ENCODE measurements at regions of chr4 and their contacts with region 1.

Region 1: DNA sequence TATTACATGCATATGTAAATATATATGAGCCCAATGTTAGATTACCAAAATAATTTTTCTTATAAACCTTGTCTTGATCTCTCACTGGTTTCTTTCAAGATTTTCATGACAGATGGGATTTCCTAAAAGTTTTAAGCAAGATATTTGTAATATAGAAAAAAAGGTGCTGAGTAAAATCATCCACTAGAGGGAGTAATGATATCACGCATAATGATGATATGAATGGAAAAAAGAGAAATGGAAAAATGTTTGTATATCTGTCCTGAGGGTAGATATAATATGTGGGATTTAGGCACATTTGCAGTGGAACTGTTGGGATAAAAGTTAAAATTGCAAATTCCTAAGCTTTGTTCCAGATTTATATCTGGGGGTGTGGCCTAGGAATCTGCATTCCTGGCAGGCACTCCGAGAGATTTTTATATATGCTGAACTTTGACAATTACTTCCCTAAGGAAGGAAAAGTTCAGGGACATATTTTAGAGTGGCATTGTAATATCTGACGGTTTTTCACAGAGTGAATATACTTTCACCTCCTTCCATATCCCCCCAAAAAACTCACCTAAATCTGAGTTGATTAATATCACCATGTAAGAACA is 60.5 kb downstream of the TMA16 start:
- DNase-seq: no peak
- H3K4me3 ChIP-seq: no peak overlapping the region
- H3K27ac ChIP-seq: no peak overlapping the region
- H3K4me1 ChIP-seq: no peaks in the 10 kb centered on the region
- H3K27me3 ChIP-seq: no peaks in the 10 kb centered on the region
- CTCF ChIP-seq: peak in 2 of 3 experiments; percentile 38 to 58

Region 2: GRCh38 chr4:163976588-163976987 is 421.6 kb after region 1 on chr4:
- intact Hi-C with region 1: no loop called
- DNase-seq: no peak
- H3K4me3 ChIP-seq: no peak overlapping the region
- H3K27ac ChIP-seq: no peak overlapping the region
- H3K4me1 ChIP-seq: no peaks in the 10 kb centered on the region
- H3K27me3 ChIP-seq: no peaks in the 10 kb centered on the region
- CTCF ChIP-seq: no peak

Region 3: DNA sequence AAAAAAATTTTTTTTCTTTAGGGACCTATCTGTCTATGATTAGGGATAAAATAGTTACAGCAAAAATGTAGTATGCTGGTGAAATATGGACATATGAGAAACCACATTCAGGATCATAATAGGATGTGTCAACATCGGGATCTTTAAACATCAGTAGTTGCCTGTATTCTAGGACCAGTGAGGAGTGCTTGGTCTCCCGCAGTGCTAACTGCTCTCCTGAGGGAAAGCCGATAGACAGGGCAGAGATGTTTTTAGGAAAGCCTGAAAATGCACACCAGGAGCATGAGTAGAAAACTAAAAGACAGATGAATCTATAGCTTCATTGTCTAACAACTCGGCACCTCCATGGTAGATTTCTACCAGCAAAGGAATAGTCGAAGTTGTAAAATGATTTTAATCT is 1020.9 kb after region 1 on chr4:
- intact Hi-C with region 1: no loop called
- DNase-seq: no peak
- H3K4me3 ChIP-seq: no peak overlapping the region
- H3K27ac ChIP-seq: no peak overlapping the region
- H3K4me1 ChIP-seq: no peaks in the 10 kb centered on the region
- H3K27me3 ChIP-seq: no peaks in the 10 kb centered on the region
- CTCF ChIP-seq: no peak

Region 4: DNA sequence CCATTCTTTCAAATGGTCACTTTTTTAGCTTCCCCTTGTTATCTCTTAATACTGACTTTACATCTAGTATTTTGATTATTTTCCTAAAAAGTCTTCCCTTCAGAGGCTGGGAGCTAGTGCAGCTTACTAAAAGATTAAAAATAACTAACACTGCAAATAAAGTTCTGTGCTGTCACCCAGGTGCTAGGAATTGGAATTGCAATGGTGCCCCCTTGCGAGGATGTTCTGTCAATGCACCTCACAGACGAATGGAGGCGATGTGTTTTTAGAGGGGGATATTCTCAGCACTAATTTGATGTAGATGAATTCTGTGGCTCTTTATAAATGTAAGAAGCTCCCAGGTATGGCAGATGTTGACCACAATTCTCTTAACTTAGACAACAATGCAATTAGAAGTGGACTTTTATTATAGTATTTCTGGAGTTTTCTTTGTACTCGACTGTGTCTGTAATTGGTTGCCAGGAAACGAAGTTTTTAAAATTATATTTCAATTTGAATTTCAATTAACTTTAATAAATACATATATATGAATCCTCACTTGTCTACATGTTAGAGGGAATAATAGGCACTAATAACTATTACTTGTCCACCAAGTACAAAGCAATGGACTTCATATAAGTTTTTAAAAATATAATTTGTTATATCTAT is 1177.0 kb after region 1 on chr4:
- intact Hi-C with region 1: loop called (anchors 5 kb)
- DNase-seq: no peak
- H3K4me3 ChIP-seq: no peak overlapping the region
- H3K27ac ChIP-seq: no peak overlapping the region
- H3K4me1 ChIP-seq: no peaks in the 10 kb centered on the region
- H3K27me3 ChIP-seq: no peaks in the 10 kb centered on the region
- CTCF ChIP-seq: peak; percentile 21 to 70 (median 60)

Measured in ascending aorta (tissue), 2 donors.